ENCODE measurements at regions of chr19 and their contacts with region 1.

Region 1: GRCh38 chr19:17766543-17767131 is 15.4 kb downstream of the FCHO1 start:
- DNase-seq: peak; percentile 92
- H3K4me3 ChIP-seq: peak overlapping the region; percentile 28
- H3K27ac ChIP-seq: no peak overlapping the region
- H3K4me1 ChIP-seq: peaks cover 4% of the 10 kb centered on the region
- H3K27me3 ChIP-seq: no peaks in the 10 kb centered on the region
- CTCF ChIP-seq: peak; percentile 94

Region 2: GRCh38 chr19:17419621-17420466 is 346.8 kb before region 1 on chr19 and contains the start of gene MVB12A:
- CTCF ChIA-PET with region 1: interaction called, 13 read pairs
- POLR2A ChIA-PET with region 1: no interaction called
- intact Hi-C with region 1: no loop called
- DNase-seq: peak; percentile 100
- H3K4me3 ChIP-seq: peak within 1 kb of the TSS; percentile 92
- H3K27ac ChIP-seq: peak within 1 kb of the TSS; percentile 81
- H3K4me1 ChIP-seq: peaks cover 3% of the 10 kb centered on the region
- H3K27me3 ChIP-seq: no peaks in the 10 kb centered on the region
- CTCF ChIP-seq: no peak
- total RNA-seq, gene MVB12A: 39.5 and 56.9 TPM in 2 replicates

Region 3: DNA sequence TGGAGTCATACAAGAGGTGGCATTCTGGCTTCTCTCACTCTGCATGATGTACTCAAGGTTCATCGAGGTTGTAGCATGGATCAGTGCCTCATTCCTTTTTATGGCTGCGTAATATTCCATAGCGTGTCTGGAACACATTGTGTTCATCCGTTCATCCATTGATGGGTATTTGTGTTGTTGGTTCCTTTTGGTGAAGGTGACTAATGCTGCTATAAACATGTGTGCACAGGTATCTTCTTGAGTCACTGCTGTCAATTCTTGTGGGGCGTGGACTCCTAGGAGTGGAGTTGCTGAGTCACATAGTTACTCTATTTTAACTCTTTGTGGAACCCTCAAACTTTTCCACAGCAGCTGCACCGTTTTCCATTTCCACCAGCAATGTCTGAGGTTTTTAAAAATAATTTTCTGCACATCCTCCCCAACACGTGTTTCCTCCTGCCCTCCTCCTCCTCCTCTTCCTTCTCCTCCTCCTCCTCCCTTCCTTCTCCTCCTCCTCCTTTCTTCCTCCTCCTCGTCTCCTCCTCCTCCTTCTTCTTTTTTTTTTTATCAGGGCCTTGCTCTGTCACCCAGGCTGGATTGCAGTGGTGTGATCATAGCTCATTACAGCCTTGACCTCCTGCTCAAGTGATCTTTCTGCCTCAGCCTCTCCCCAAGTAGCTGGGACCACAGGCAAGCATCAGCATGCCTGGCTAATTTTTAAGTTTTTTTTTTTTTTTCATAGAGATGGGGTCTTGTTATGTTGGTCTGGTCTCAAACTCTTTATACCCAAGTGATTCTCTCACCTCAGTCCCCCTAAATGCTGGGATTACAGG is 316.2 kb before region 1 on chr19:
- CTCF ChIA-PET with region 1: no interaction called
- POLR2A ChIA-PET with region 1: no interaction called
- intact Hi-C with region 1: loop called (anchors 5 kb)
- DNase-seq: no peak
- H3K4me3 ChIP-seq: no peak overlapping the region
- H3K27ac ChIP-seq: no peak overlapping the region
- H3K4me1 ChIP-seq: peaks cover 5% of the 10 kb centered on the region
- H3K27me3 ChIP-seq: peaks cover 29% of the 10 kb centered on the region
- CTCF ChIP-seq: no peak

Region 4: GRCh38 chr19:17605761-17606745 is 160.6 kb before region 1 on chr19:
- CTCF ChIA-PET with region 1: interaction called, 10 read pairs
- POLR2A ChIA-PET with region 1: no interaction called
- intact Hi-C with region 1: no loop called
- DNase-seq: peak; percentile 93
- H3K4me3 ChIP-seq: peak overlapping the region; percentile 49
- H3K27ac ChIP-seq: peak overlapping the region; percentile 93
- H3K4me1 ChIP-seq: peaks cover 10% of the 10 kb centered on the region
- H3K27me3 ChIP-seq: no peaks in the 10 kb centered on the region
- CTCF ChIP-seq: peak; percentile 59

Region 5: DNA sequence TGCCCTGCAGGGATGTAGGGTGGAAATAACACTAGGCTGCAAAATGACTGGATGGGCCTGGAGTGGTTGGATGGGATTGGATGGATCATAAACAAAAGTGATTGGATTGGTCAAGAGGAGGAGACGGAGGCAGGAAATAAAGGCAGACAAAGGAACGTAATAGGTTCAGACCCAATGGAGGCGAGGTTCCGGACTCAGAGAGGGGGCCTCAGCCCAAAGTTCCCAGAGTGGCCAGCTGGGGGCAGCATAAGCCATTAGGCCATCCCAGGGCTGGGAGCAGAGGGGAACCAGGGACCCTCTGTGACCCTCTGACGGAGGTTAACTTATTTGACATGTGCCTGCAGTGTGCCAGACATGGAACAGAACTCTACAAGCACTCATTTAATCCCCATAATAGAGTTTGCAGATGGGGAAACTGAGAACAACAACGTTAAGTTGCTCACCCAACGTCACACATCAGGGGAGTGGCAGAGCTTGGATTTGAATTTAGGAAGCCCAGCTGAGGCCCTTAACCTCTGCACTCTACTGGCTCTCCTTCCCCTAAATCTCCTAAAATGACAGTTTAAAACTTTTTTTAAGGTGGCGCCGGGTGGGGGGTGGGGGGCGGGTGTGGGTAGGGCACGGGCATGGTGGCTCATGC is 62.7 kb before region 1 on chr19:
- CTCF ChIA-PET with region 1: interaction called, 6 read pairs
- POLR2A ChIA-PET with region 1: no interaction called
- intact Hi-C with region 1: loop called (anchors 1 kb)
- DNase-seq: peak; percentile 67
- H3K4me3 ChIP-seq: no peak overlapping the region
- H3K27ac ChIP-seq: no peak overlapping the region
- H3K4me1 ChIP-seq: no peaks in the 10 kb centered on the region
- H3K27me3 ChIP-seq: peaks cover 1% of the 10 kb centered on the region
- CTCF ChIP-seq: peak; percentile 89

Region 6: DNA sequence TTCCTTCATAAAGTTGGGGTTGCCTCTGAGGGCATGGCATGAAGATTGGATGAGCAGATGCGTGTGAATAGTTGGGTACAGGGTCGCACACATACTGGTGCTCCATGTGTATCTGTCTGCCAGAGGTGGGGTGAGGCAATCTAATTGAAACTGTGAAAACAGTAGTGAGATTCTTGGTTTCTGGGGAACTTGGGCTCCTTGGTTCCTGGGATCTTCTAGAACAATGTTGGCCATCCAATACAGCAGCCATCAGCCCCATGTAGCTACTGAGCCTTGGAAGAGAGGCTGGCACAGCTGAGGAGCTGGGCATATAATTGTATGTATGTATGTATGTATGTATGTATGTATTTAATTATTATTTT is 14.7 kb before region 1 on chr19:
- CTCF ChIA-PET with region 1: interaction called, 10 read pairs
- POLR2A ChIA-PET with region 1: no interaction called
- intact Hi-C with region 1: no loop called
- DNase-seq: no peak
- H3K4me3 ChIP-seq: no peak overlapping the region
- H3K27ac ChIP-seq: no peak overlapping the region
- H3K4me1 ChIP-seq: peaks cover 6% of the 10 kb centered on the region
- H3K27me3 ChIP-seq: no peaks in the 10 kb centered on the region
- CTCF ChIP-seq: no peak

Measured in A673 (cell line).